KBM-7 (cell line): ENCODE measurements at regions of chr5 and their contacts with region 1.

Region 1: DNA sequence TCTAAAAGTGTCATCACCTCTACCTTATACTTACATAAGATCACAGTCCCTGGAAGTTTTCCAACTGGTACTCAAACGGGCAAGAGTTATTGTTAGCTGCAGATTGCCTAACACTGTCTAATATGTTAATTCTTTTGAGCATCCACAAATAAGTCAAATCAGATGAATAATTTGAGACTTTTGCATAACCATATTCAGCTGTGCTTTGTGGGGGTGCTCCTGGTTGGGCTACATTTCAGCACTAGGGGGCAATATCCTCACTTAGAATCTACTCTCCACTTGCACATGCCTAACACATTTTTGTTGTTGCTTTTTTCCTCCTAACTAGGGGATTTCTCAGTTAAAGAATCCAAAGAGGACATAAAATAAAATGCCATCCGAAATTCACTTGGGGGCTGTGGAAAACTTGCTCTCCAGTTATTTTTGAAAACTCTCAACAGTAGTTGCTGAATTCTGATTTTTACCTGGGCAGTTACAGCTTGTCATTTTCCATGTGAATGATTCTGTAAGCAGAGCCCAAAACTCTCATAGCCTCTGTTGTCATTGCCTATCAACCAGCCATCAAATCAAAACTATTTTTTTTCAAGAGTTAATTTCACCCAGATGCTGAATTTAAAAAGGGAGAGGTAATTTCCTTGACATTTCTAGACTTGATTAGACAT is 71.5 kb downstream of the TRIM36 start:
- DNase-seq: peak; percentile 86

Region 2: DNA sequence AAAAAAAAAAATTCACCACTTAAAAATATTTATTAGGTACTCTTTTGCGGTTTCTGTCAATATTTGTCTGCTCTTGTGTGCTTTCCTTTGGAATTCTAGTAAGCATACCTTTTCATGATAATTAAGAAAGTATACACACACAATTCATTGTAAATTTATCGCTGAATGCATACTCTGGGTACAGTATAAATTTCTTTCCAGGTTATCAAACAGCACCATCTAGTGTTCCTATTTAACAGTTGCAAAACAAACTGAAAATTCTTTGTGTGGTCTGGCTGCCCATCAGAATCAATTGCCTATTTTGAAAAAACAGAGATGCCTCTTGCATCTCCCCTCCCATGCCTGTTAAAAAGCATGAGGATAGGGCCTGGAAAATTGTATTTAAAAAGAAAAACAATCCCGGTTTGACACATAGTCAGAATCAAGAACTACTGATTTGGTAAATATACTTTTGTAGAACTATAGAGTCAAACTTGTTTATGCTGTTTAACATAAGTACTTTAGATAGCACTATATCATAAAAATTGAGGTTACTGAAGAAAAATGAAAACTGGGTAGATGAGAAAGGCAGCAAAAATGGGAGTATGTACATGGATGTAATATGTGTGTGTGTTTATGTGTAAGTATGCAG is 148.3 kb after region 1 on chr5:
- in situ Hi-C with region 1: loop called (anchors 25 kb)
- DNase-seq: peak; percentile 69

Region 3: DNA sequence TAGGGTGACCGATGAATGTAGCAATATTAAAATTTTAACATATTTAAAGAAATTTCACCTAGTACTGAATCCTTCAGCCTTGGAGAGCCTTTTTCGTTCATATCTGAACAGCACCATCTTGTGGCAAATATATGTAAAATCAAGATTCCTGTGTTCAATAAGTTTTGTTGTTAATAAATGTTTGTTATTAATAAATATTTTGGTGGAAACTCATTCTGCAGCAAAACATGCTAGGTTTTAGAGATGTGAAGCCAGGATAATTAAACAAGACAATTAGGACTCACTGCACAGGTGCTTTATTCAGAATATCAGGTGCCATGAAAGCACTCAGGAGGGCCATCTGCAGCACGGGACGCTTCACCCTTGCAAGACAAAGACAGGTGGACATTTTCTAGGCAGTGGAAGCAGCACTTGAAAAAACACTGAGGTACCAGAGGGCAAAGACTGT is 488.5 kb after region 1 on chr5:
- in situ Hi-C with region 1: loop called (anchors 25 kb)
- DNase-seq: peak; percentile 36

Region 4: GRCh38 chr5:115625579-115626444 is 527.6 kb after region 1 on chr5 and contains the start of gene TMED7:
- in situ Hi-C with region 1: no loop called
- DNase-seq: peak; percentile 99